Activated naive CD4-positive, alpha-beta T cell treated with anti-CD3 and anti-CD28 coated beads for 36 hours (primary cell): ENCODE measurements at regions of chr16 and their contacts with region 1.

Region 1: GRCh38 chr16:27315277-27316037 is 1.7 kb downstream of the IL4R start:
- DNase-seq: peak; percentile 86
- H3K4me3 Mint-ChIP-seq: peak overlapping the region; percentile 99
- H3K27ac Mint-ChIP-seq: peak overlapping the region; percentile 97
- H3K4me1 Mint-ChIP-seq: peaks cover 59% of the 10 kb centered on the region
- H3K27me3 Mint-ChIP-seq: no peaks in the 10 kb centered on the region

Region 2: GRCh38 chr16:26598061-26598460 is 717.4 kb before region 1 on chr16:
- CTCF ChIA-PET with region 1: interaction called, 3 read pairs
- intact Hi-C with region 1: loop called (anchors 5 kb)
- DNase-seq: peak; percentile 86
- H3K4me3 Mint-ChIP-seq: peak overlapping the region; percentile 17
- H3K27ac Mint-ChIP-seq: peak overlapping the region; percentile 82
- H3K4me1 Mint-ChIP-seq: peaks cover 48% of the 10 kb centered on the region
- H3K27me3 Mint-ChIP-seq: peaks cover 17% of the 10 kb centered on the region

Region 3: GRCh38 chr16:27203429-27204231 is 111.8 kb before region 1 on chr16 and contains the start of gene KDM8:
- CTCF ChIA-PET with region 1: interaction called, 4 read pairs
- intact Hi-C with region 1: loop called (anchors 1 kb)
- DNase-seq: peak; percentile 100
- H3K4me3 Mint-ChIP-seq: peak within 1 kb of the TSS; percentile 99
- H3K27ac Mint-ChIP-seq: peak within 1 kb of the TSS; percentile 100
- H3K4me1 Mint-ChIP-seq: peaks cover 50% of the 10 kb centered on the region
- H3K27me3 Mint-ChIP-seq: no peaks in the 10 kb centered on the region
- total RNA-seq, gene KDM8: 11.3 to 13.9 TPM

Region 4: DNA sequence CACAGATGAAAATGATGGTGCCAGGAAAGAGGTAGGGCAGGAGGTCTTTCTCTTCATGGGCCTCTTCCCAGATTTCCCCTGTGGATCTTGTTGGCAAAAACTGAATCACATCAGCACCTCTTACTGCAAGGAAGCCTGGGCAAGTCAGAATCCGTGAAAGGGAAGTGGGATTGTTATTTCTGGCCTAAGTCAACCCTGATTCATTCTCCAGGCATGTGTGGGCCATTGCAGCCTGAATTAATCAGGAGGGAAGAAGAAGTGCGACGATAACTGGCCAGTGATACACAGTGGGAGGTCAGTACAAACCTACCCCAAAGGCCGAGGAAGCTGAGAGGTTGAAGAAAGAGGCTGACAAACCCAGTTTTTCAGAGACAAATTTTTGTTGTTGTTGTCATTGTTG is 29.0 kb before region 1 on chr16:
- CTCF ChIA-PET with region 1: interaction called, 3 read pairs
- intact Hi-C with region 1: loop called (anchors 2 kb)
- DNase-seq: no peak
- H3K4me3 Mint-ChIP-seq: no peak overlapping the region
- H3K27ac Mint-ChIP-seq: no peak overlapping the region
- H3K4me1 Mint-ChIP-seq: peaks cover 72% of the 10 kb centered on the region
- H3K27me3 Mint-ChIP-seq: peaks cover 8% of the 10 kb centered on the region

Region 5: DNA sequence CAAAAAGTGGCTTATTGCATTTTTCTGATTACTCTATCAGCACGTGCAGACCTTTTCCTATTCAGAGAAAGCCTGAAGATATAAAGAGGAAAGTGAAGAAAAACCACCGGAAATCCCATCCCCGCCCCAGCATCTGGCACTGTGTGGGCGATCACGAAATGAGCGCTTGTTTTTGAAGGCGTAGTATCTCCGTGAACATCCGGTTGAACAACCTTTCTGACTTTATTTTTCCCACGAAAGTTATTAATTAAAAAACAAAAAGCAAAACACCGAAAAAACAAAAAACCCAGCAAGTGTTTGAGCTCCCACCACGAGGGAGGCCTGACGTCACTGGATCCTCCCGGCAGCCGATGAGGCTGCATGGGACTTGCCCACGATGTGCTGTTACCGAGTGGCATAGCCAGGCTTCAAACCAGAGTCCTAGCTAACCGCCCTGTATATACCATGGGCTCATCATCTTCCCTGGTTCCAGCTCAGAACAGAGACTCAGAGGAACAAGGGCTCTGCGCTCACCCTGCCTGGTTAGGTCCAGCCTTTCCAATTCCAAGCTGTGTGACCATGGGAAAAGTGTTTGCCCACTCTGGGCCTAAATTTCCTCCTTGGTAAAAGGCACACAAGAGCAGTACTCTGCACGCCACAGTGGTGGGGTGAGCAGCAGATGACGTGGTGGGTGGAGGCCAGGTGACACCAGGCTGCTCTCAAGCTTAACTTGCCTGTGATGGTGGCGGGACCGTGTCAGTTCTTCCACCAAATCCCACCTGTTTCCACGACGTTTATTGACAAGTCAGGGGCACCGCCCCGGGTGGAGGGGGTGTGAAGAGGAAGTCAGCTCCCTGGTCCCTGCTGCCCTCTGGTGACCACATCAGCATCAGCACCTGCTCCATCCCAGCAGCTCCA is 52.3 kb after region 1 on chr16:
- CTCF ChIA-PET with region 1: interaction called, 33 read pairs
- intact Hi-C with region 1: loop called (anchors 1 kb)
- DNase-seq: peak; percentile 97
- H3K4me3 Mint-ChIP-seq: peak overlapping the region; percentile 53
- H3K27ac Mint-ChIP-seq: peak overlapping the region; percentile 99
- H3K4me1 Mint-ChIP-seq: peaks cover 76% of the 10 kb centered on the region
- H3K27me3 Mint-ChIP-seq: no peaks in the 10 kb centered on the region

Region 6: GRCh38 chr16:27461483-27462171 is 146.2 kb after region 1 on chr16:
- CTCF ChIA-PET with region 1: interaction called, 4 read pairs
- intact Hi-C with region 1: loop called (anchors 1 kb)
- DNase-seq: no peak
- H3K4me3 Mint-ChIP-seq: no peak overlapping the region
- H3K27ac Mint-ChIP-seq: no peak overlapping the region
- H3K4me1 Mint-ChIP-seq: peaks cover 30% of the 10 kb centered on the region
- H3K27me3 Mint-ChIP-seq: no peaks in the 10 kb centered on the region